ENCODE measurements at regions of chr6 and their contacts with region 1.

Region 1: DNA sequence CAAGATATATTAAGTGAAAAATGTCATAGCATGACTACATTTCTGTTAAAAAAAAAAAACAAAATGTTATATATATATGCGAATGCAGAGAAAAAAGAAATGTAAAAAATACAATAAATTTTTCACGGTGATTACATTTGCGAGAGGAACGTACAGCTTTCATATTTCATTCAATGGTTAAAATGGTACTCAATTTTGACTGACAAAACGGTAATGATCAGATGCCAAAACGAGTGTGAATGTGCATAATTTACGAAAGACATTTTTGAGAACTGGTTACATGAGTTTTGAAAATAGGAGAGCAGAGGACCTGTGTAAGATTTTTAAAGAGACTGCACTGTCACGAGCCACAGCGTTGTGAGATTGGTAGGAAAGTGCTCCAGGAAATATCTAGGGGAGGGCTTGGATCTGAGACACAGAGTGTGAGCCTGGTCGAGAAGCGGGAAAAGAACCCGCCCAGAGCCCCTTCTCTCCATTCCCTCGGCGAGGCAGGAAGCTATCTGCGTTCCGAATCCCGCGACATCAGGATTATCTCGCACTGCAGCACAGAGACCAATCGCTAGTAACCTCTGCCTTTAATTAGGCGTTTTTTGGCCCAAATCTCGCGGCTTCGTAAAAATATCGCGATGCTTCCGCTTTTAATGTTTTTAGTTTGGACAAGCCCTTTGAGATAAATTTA is 28.5 kb downstream of the TRIM27 start:
- DNase-seq: peak; percentile 96
- ATAC-seq: peak; percentile 88
- H3K4me3 ChIP-seq: peak overlapping the region; percentile 87
- H3K27ac ChIP-seq: peak overlapping the region; percentile 89
- H3K4me1 ChIP-seq: no peaks in the 10 kb centered on the region
- H3K27me3 ChIP-seq: no peaks in the 10 kb centered on the region
- CTCF ChIP-seq: no peak
- EP300 ChIP-seq: no peak
- POLR2A ChIP-seq: peak; percentile 87
- RAD21 ChIP-seq: no peak

Region 2: DNA sequence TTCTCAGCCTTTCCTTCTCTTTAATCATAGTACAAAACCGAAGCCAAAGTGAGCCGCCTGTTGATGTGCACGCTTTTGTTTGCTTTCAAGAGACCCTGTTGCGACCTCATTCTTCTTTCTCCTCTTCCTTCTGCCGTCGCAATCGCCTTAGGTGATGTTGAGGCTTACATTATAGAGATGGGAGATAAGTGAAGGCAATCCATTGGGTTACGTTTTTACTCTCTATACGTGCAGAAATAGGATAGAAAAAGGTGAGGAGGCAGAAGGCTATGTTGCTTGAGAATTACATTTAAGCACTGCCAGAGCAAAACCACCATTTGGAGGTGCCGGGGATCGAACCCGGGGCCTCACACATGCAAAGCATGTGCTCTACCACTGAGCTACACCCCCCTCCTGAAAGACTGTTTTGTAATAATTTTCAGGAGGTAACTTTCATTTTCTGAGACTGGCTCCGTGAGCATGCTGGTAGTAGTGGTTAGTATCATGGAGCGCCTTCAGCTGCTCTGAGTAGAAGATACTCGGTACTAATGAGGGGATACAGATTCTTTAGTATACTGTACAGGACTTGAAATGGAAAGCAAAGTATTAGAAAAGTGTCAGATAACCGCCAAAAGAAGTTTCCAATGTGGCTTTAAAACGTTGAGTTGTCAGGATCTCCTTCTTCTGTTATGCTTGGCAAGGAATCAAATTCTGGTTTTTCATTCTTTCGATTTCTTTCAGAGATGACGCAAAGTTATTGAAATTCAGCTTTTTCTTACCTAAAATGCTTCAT is 137.0 kb before region 1 on chr6:
- CTCF ChIA-PET with region 1: no interaction called
- POLR2A ChIA-PET with region 1: no interaction called
- RAD21 ChIA-PET with region 1: no interaction called
- SMC1A ChIA-PET with region 1: no interaction called
- in situ Hi-C with region 1: no loop called
- intact Hi-C with region 1: no loop called
- DNase-seq: no peak
- ATAC-seq: no peak
- H3K4me3 ChIP-seq: no peak overlapping the region
- H3K27ac ChIP-seq: no peak overlapping the region
- H3K4me1 ChIP-seq: no peaks in the 10 kb centered on the region
- H3K27me3 ChIP-seq: no peaks in the 10 kb centered on the region
- CTCF ChIP-seq: no peak
- EP300 ChIP-seq: no peak
- POLR2A ChIP-seq: no peak
- RAD21 ChIP-seq: no peak

Region 3: GRCh38 chr6:28863604-28864320 is 31.5 kb before region 1 on chr6:
- CTCF ChIA-PET with region 1: no interaction called
- POLR2A ChIA-PET with region 1: no interaction called
- RAD21 ChIA-PET with region 1: no interaction called
- SMC1A ChIA-PET with region 1: interaction called, 4 read pairs
- in situ Hi-C with region 1: no loop called
- intact Hi-C with region 1: loop called (anchors 2 kb)
- DNase-seq: peak; percentile 61
- ATAC-seq: peak; percentile 72
- H3K4me3 ChIP-seq: peak overlapping the region; percentile 92
- H3K27ac ChIP-seq: 0 out of 2 replicates have a peak overlapping the region, but pooled peaks have one; percentile 7
- H3K4me1 ChIP-seq: peaks cover 2% of the 10 kb centered on the region; the same call in 1 of the 2 replicates
- H3K27me3 ChIP-seq: no peaks in the 10 kb centered on the region; a peak in 1 of 4 replicates
- CTCF ChIP-seq: no peak
- EP300 ChIP-seq: peak in 1 of 2 experiments; percentile 4; a peak in 1 of 4 replicates
- POLR2A ChIP-seq: no peak
- RAD21 ChIP-seq: no peak

Region 4: DNA sequence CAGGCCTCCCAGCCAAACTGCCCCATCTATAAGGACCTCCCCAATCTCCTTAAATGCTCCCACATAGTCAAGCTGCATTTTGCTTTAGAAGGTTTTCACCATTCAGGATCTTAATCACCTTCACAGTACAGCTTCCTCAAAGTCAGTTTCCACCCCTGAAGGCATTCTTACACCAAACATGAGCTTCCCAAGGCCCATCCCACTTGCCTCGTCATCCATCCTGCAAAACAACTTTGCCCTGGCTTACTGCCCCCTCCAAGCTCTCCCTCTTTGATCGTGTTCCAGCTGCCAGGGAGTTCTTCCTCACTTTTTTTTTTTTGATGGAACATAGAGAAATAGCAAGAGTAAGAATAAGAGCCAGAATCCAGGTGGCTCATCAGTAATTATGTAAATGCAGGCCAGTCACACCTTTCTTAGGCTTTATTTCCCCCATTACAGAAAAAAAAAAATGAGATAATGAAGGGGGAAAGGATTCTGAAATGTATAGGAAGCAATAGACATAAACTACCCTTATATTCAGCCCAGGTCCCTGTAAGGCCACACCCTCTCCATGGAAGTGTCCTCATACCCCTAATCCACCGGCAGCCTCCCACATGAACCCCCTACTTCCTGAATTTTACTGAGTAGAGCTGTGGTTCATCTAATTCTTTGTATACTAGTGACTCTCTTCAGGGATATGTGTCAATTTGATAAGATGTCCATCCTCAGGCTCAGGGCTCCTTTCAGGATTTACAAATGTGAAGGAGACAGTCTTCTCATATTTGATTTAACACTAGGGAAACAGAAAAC is 15.8 kb after region 1 on chr6:
- CTCF ChIA-PET with region 1: no interaction called
- POLR2A ChIA-PET with region 1: no interaction called
- RAD21 ChIA-PET with region 1: no interaction called
- SMC1A ChIA-PET with region 1: no interaction called
- in situ Hi-C with region 1: no loop called
- intact Hi-C with region 1: no loop called
- DNase-seq: no peak
- ATAC-seq: no peak
- H3K4me3 ChIP-seq: no peak overlapping the region
- H3K27ac ChIP-seq: no peak overlapping the region
- H3K4me1 ChIP-seq: no peaks in the 10 kb centered on the region
- H3K27me3 ChIP-seq: no peaks in the 10 kb centered on the region
- CTCF ChIP-seq: no peak
- EP300 ChIP-seq: no peak
- POLR2A ChIP-seq: no peak
- RAD21 ChIP-seq: no peak

Region 5: GRCh38 chr6:28923318-28924102 is 28.2 kb after region 1 on chr6 and contains the start of gene TRIM27:
- CTCF ChIA-PET with region 1: interaction called, 5 read pairs
- POLR2A ChIA-PET with region 1: interaction called, 33 read pairs
- RAD21 ChIA-PET with region 1: interaction called, 8 read pairs
- SMC1A ChIA-PET with region 1: interaction called, 7 read pairs
- in situ Hi-C with region 1: no loop called
- intact Hi-C with region 1: loop called (anchors 2 kb)
- DNase-seq: peak; percentile 34
- ATAC-seq: peak; percentile 93
- H3K4me3 ChIP-seq: peak within 1 kb of the TSS; percentile 87
- H3K27ac ChIP-seq: peak within 1 kb of the TSS; percentile 94
- H3K4me1 ChIP-seq: peaks cover 17% of the 10 kb centered on the region
- H3K27me3 ChIP-seq: no peaks in the 10 kb centered on the region
- CTCF ChIP-seq: no peak
- EP300 ChIP-seq: no peak
- POLR2A ChIP-seq: peak; percentile 88
- RAD21 ChIP-seq: no peak
- polyA plus RNA-seq, gene TRIM27: 18.5 to 27.9 TPM

Region 6: GRCh38 chr6:28981833-28982475 is 86.7 kb after region 1 on chr6:
- CTCF ChIA-PET with region 1: no interaction called
- POLR2A ChIA-PET with region 1: no interaction called
- RAD21 ChIA-PET with region 1: no interaction called
- SMC1A ChIA-PET with region 1: interaction called, 5 read pairs
- in situ Hi-C with region 1: no loop called
- intact Hi-C with region 1: loop called (anchors 2 kb)
- DNase-seq: peak; percentile 79
- ATAC-seq: peak; percentile 77
- H3K4me3 ChIP-seq: peak overlapping the region; percentile 100
- H3K27ac ChIP-seq: no peak overlapping the region
- H3K4me1 ChIP-seq: peaks cover 6% of the 10 kb centered on the region; the same call in 1 of the 2 replicates
- H3K27me3 ChIP-seq: no peaks in the 10 kb centered on the region
- CTCF ChIP-seq: no peak; a peak in 1 of 6 replicates
- EP300 ChIP-seq: peak in 1 of 2 experiments; percentile 80; a peak in 1 of 4 replicates
- POLR2A ChIP-seq: no peak
- RAD21 ChIP-seq: no peak

Region 7: DNA sequence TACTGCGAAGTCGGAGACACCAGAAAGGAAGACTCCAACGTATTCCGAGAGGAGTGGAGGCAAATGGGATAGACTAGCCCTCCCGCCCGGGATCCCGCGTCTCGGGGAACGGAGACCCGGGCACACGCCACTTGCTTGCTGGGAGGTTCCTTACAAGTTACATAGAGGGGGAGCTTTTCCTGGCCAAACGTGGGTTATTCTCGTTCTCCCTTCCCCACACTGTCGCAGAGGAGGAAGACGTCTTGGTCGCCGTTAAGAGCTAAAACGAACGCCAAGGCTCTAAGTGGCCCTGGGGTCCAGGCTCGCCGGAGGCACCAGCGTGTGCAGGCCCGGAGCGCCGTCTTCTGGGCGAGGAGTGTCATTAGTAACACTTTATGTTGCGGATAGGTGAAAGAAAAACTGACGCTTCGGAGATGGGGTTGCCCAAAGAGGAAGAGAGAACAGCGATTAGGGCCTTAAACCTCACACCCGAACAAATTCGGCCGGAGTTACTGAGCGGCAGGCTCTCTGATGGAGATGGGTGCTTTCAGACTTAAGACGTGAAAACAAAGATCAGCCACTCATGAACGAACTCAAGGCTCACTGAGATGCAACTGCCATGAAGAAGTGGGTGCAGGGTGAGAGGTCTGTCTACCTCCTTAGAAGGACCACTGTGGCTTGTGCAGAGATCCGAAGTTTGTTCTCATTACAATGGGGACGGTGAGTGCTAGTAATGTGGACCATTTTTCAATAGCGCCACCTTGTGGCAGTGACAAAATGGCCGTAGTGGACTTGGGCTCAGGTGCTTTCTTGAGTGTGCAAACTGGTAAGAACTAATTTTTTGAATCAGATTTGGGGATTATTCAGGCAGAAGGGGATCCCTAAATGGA is 121.5 kb after region 1 on chr6:
- CTCF ChIA-PET with region 1: no interaction called
- POLR2A ChIA-PET with region 1: no interaction called
- RAD21 ChIA-PET with region 1: no interaction called
- SMC1A ChIA-PET with region 1: no interaction called
- in situ Hi-C with region 1: no loop called
- intact Hi-C with region 1: loop called (anchors 2 kb)
- DNase-seq: peak; percentile 56
- ATAC-seq: peak; percentile 97
- H3K4me3 ChIP-seq: peak overlapping the region; percentile 53
- H3K27ac ChIP-seq: no peak overlapping the region
- H3K4me1 ChIP-seq: no peaks in the 10 kb centered on the region
- H3K27me3 ChIP-seq: no peaks in the 10 kb centered on the region; a peak in 2 of 4 replicates
- CTCF ChIP-seq: peak; percentile 76 to 89 (median 78)
- EP300 ChIP-seq: no peak
- POLR2A ChIP-seq: no peak
- RAD21 ChIP-seq: peak; percentile 75

Region 8: DNA sequence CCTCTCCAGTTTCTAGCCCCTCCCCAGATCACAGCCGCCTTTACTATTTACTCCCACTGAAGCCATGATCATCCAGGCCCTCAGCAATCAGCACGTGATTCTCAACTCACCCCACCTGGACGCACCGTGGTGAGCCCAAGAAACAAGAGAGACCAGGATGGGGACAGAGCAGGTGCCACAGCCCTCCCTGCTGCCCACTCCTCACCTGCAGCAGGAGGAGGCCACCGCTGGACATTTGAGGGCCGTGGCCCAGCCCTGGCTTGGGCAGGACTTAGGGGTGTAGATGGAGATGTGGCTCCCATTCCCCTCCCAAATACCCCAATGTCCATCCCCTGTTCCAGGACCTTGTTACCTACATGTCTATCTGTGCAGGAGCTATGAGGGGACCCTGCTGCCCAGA is 848.3 kb after region 1 on chr6:
- CTCF ChIA-PET with region 1: no interaction called
- POLR2A ChIA-PET with region 1: interaction called, 12 read pairs
- RAD21 ChIA-PET with region 1: no interaction called
- SMC1A ChIA-PET with region 1: no interaction called
- in situ Hi-C with region 1: no loop called
- intact Hi-C with region 1: no loop called
- DNase-seq: no peak
- ATAC-seq: no peak
- H3K4me3 ChIP-seq: no peak overlapping the region
- H3K27ac ChIP-seq: no peak overlapping the region
- H3K4me1 ChIP-seq: no peaks in the 10 kb centered on the region
- H3K27me3 ChIP-seq: no peaks in the 10 kb centered on the region
- CTCF ChIP-seq: no peak
- EP300 ChIP-seq: no peak
- POLR2A ChIP-seq: no peak
- RAD21 ChIP-seq: no peak

Measured in GM12878 (cell line).